ENCODE measurements at regions of chr19 and their contacts with region 1.

Region 1: DNA sequence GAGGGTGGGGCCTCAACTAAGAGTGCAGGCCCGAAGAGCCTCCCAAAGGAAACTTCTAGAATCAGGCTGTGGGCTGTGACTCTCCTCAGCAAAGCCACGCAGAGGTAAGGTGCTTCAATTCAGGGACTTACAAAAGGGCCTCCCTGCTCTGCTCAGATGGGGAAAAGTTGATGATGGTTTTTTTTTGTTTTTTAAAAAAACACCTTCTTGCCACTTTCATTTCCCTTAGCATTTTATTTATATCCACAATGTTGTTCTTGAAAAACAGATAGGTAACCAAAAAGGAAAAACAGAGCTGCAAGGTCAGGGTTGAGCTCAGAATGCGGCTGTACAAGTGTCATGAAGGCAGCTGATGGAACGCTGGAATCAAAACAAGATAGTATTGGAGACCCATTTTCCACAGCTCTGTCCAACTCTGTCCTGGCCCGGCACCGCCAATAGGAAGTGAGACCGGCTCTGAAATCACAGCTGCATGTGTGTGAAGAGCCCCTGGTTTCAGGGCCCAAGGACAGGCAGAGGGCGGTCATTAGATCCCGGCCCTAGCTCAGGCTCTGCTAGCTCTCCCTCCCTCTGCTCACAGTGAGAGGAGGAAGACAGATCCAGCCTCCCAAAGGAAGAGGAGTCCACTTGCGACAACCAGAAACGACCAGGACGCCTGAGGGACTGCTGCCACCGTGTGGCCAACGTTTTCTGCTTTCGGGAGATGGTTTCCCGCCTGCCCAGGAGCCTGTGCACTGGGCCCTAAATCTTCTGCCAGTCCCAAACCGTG is 58.3 kb downstream of the KLF2 start:
- DNase-seq: peak; percentile 73
- H3K4me3 ChIP-seq: no peak overlapping the region
- H3K27ac ChIP-seq: no peak overlapping the region
- H3K27me3 ChIP-seq: no peaks in the 10 kb centered on the region
- CTCF ChIP-seq: peak; percentile 86

Region 2: GRCh38 chr19:16247353-16248182 is 135.4 kb before region 1 on chr19:
- CTCF ChIA-PET with region 1: interaction called, 240 read pairs
- POLR2A ChIA-PET with region 1: interaction called, 7 read pairs
- DNase-seq: peak; percentile 37
- H3K4me3 ChIP-seq: no peak overlapping the region
- H3K27ac ChIP-seq: no peak overlapping the region
- H3K27me3 ChIP-seq: no peaks in the 10 kb centered on the region
- CTCF ChIP-seq: peak; percentile 96

Region 3: GRCh38 chr19:16324384-16325160 is 58.4 kb before region 1 on chr19 and contains the start of gene KLF2:
- CTCF ChIA-PET with region 1: interaction called, 36 read pairs
- POLR2A ChIA-PET with region 1: interaction called, 11 read pairs
- DNase-seq: peak; percentile 67
- H3K4me3 ChIP-seq: peak within 1 kb of the TSS; percentile 72
- H3K27ac ChIP-seq: peak within 1 kb of the TSS; percentile 87
- H3K27me3 ChIP-seq: no peaks in the 10 kb centered on the region
- CTCF ChIP-seq: no peak
- polyA plus RNA-seq, gene KLF2: 0.60 and 1.5 TPM in 2 replicates

Region 4: GRCh38 chr19:16330368-16330801 is 52.6 kb before region 1 on chr19:
- CTCF ChIA-PET with region 1: interaction called, 36 read pairs
- POLR2A ChIA-PET with region 1: interaction called, 4 read pairs
- DNase-seq: no peak
- H3K4me3 ChIP-seq: no peak overlapping the region
- H3K27ac ChIP-seq: peak overlapping the region; percentile 31
- H3K27me3 ChIP-seq: no peaks in the 10 kb centered on the region
- CTCF ChIP-seq: no peak

Region 5: DNA sequence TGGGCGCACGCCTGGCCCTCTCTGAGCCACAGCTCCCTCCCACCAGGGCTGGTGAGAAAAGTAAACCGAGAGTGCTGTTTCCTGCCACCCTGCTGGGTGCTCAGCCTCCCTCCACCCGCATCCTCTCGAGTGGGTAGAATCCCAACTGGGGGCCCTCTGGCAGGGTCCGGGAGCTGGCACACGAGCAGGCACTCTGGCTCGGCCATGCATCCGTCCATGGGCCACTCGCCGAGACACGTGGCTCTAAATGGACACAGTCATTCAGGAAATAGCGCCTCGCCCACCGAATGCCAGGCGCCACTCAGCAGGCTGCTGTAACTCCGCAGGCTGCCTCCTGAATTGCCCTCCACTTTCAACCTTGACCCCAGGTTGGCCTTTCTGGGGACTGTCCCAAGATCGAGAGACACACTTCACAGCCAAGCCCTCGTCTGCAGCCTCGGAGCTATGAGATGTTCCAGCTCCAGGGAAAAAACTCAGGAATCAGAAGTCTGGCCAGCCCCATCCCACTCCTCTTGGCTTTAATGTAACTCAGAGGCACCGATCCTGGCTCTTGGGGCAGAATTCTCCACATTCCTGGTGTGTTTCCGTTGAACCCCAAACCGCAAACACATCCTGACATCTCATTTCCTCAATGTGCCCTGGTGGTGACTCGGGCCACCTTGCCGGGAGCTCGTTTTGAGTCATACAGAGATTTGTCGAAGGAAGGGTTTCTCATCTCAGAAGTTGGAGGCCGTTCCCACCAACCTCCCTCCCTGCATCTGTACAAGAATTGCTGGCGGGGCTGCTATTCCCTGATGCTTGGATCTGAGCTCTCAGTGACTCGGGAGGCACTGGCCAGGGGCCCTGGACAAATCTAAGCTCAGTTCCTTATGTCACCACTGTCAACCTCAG is 44.2 kb before region 1 on chr19:
- CTCF ChIA-PET with region 1: interaction called, 13 read pairs
- POLR2A ChIA-PET with region 1: interaction called, 3 read pairs
- DNase-seq: peak; percentile 69
- H3K4me3 ChIP-seq: no peak overlapping the region
- H3K27ac ChIP-seq: peak overlapping the region; percentile 81
- H3K27me3 ChIP-seq: no peaks in the 10 kb centered on the region
- CTCF ChIP-seq: peak; percentile 21; the same call in 1 of the 2 replicates

Region 6: DNA sequence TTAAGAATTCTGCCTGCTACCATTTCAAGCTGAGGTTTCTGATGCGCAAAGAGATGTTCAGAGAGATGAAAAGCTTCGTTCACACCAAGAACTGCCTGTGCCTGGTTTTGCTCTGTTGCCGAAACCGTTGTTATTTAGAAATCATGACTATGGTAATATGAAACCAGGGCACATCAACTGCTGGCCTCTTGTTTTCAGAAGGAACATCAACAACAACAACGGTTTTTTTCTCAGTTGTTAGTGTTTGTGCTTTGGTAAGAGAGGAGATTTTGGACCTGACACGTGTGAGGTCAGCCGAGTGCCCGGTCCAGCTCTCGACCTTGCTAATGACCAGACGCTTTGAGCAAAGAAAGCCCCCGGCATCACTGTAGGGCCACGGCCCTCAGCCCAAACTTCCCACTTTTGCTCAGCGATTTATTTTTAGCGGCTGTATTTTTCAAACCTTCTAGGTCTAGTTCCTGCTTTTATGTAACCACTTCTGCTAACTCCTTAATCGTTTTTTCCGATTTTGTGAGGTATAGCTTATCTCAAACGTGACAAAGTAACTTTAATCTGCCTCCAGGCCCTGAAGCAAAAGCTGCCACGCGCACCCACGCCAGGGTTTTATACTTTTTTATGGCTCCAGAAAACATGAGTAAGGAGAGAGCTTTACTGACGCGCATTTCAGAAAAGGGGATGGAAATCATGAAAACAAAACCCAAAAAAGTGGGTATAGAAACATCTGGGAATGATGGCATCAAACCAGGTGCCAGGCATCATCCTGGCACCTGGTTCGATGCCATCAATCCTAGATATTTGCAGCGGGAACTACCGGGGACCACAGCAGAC is 16.3 kb before region 1 on chr19:
- CTCF ChIA-PET with region 1: interaction called, 11 read pairs
- POLR2A ChIA-PET with region 1: no interaction called
- DNase-seq: no peak
- H3K4me3 ChIP-seq: no peak overlapping the region
- H3K27ac ChIP-seq: no peak overlapping the region
- H3K27me3 ChIP-seq: no peaks in the 10 kb centered on the region
- CTCF ChIP-seq: no peak

Region 7: GRCh38 chr19:16398504-16399249 is 15.7 kb after region 1 on chr19:
- CTCF ChIA-PET with region 1: interaction called, 13 read pairs
- POLR2A ChIA-PET with region 1: no interaction called
- DNase-seq: no peak
- H3K4me3 ChIP-seq: no peak overlapping the region
- H3K27ac ChIP-seq: no peak overlapping the region
- H3K27me3 ChIP-seq: no peaks in the 10 kb centered on the region
- CTCF ChIP-seq: no peak

Region 8: GRCh38 chr19:16518483-16519229 is 135.7 kb after region 1 on chr19:
- CTCF ChIA-PET with region 1: no interaction called
- POLR2A ChIA-PET with region 1: no interaction called
- DNase-seq: no peak
- H3K4me3 ChIP-seq: no peak overlapping the region
- H3K27ac ChIP-seq: no peak overlapping the region
- H3K27me3 ChIP-seq: no peaks in the 10 kb centered on the region
- CTCF ChIP-seq: no peak